Mammary epithelial cell (primary cell): ENCODE measurements at regions of chr4 and their contacts with region 1.

Region 1: GRCh38 chr4:27010334-27010940 is 149.8 kb downstream of the STIM2 start:
- DNase-seq: peak; percentile 32
- H3K4me3 ChIP-seq: no peak overlapping the region
- H3K27ac ChIP-seq: no peak overlapping the region
- H3K4me1 ChIP-seq: peaks cover 4% of the 10 kb centered on the region
- H3K27me3 ChIP-seq: no peaks in the 10 kb centered on the region
- CTCF ChIP-seq: peak; percentile 85 to 86

Region 2: DNA sequence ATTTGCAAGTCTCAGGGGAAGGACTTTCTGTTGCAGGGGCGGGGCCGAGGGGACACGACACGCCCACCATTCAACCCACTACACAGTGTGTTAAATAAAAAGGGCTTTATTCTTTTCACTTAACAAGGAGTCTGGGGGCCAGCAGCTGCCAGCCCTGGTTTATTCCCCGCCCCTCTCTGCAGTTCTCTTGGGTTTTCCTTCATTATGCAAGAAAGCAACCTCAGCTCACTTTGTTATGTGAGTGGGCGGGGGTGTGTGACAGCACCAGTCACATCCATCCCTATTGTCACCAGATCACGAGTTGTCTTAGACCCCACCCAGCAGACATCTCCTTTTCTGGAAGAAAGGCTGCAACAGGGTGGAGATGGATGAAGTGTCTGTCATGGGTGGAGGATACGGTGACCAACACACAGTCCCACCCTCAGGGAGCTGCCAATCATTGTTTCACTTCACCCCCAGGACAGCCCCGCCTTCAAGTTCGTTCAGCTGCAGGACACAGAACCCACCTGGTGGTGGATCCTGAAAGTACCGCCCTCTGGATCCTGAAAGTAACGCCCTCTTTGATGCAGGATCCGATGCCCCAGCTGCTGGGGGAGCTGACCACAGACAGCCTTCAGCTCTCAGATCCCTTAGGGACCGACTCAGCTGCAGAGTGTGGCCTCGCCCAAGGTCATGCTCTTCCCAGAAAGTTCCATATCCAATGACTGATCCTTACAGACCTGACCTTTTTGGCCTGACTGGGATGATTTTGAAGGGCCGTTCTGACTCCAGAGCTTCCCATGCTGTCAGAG is 1016.8 kb before region 1 on chr4:
- CTCF ChIA-PET with region 1: no interaction called
- dilution Hi-C with region 1: no loop called
- in situ Hi-C with region 1: loop called in 1 of 2 experiments (anchors 25 kb)
- intact Hi-C with region 1: loop called (anchors 2 kb)
- DNase-seq: no peak
- H3K4me3 ChIP-seq: no peak overlapping the region
- H3K27ac ChIP-seq: no peak overlapping the region
- H3K4me1 ChIP-seq: no peaks in the 10 kb centered on the region
- H3K27me3 ChIP-seq: no peaks in the 10 kb centered on the region
- CTCF ChIP-seq: no peak

Region 3: GRCh38 chr4:26235500-26235899 is 774.9 kb before region 1 on chr4:
- CTCF ChIA-PET with region 1: no interaction called
- dilution Hi-C with region 1: no loop called
- in situ Hi-C with region 1: no loop called
- intact Hi-C with region 1: no loop called
- DNase-seq: peak; percentile 49
- H3K4me3 ChIP-seq: no peak overlapping the region
- H3K27ac ChIP-seq: no peak overlapping the region
- H3K4me1 ChIP-seq: no peaks in the 10 kb centered on the region
- H3K27me3 ChIP-seq: peaks cover 6% of the 10 kb centered on the region
- CTCF ChIP-seq: peak in 1 of 2 donors; percentile 32

Region 4: GRCh38 chr4:26330186-26330787 is 680.1 kb before region 1 on chr4:
- CTCF ChIA-PET with region 1: no interaction called
- dilution Hi-C with region 1: no loop called
- in situ Hi-C with region 1: loop called in 1 of 2 experiments (anchors 25 kb)
- intact Hi-C with region 1: loop called (anchors 1 kb)
- DNase-seq: peak; percentile 34
- H3K4me3 ChIP-seq: no peak overlapping the region
- H3K27ac ChIP-seq: no peak overlapping the region
- H3K4me1 ChIP-seq: peaks cover 14% of the 10 kb centered on the region
- H3K27me3 ChIP-seq: no peaks in the 10 kb centered on the region
- CTCF ChIP-seq: peak; percentile 55 to 64

Region 5: GRCh38 chr4:26459054-26459755 is 551.2 kb before region 1 on chr4:
- CTCF ChIA-PET with region 1: interaction called, 4 read pairs
- dilution Hi-C with region 1: no loop called
- in situ Hi-C with region 1: loop called (anchors 10 to 25 kb)
- intact Hi-C with region 1: loop called (anchors 1 kb)
- DNase-seq: peak; percentile 44
- H3K4me3 ChIP-seq: no peak overlapping the region
- H3K27ac ChIP-seq: no peak overlapping the region
- H3K4me1 ChIP-seq: no peaks in the 10 kb centered on the region
- H3K27me3 ChIP-seq: no peaks in the 10 kb centered on the region
- CTCF ChIP-seq: peak; percentile 62 to 69

Region 6: GRCh38 chr4:26746802-26747213 is 263.6 kb before region 1 on chr4:
- CTCF ChIA-PET with region 1: no interaction called
- dilution Hi-C with region 1: no loop called
- in situ Hi-C with region 1: loop called in 1 of 2 experiments (anchors 25 kb)
- intact Hi-C with region 1: no loop called
- DNase-seq: peak; percentile 16
- H3K4me3 ChIP-seq: no peak overlapping the region
- H3K27ac ChIP-seq: no peak overlapping the region
- H3K4me1 ChIP-seq: no peaks in the 10 kb centered on the region
- H3K27me3 ChIP-seq: no peaks in the 10 kb centered on the region
- CTCF ChIP-seq: no peak

Region 7: DNA sequence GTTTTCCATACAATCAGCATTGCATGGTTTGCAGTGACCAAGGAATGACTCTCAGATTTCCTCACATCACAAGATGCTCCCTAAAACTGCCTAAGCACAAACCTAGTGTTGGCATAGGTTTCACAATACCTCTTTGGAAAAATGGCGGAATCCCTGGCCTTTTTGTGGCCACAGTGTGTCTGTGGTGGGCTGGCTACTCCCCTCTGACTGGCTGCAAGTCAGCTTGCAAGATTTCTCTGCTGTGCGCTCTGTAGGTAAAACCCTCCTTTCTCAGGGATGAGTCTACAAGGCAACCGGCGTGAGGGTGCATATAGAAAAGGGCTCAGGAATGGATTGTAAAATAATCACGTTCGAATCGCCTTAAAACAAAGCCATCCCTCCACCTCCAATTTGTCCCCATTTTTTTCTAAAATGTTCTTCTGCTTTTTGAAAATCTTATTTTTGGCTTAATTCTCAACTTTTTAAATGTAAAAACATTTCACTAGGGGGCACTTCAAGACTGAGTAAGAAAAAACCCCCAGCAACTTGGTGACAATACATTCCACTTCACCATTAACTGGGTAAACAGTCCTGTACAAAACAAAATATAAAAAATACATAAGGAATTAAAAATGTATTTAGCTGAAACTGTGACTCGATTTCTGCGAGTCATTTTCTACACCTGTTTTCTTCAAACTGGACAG is 85.8 kb after region 1 on chr4:
- CTCF ChIA-PET with region 1: no interaction called
- dilution Hi-C with region 1: no loop called
- in situ Hi-C with region 1: no loop called
- intact Hi-C with region 1: no loop called
- DNase-seq: no peak
- H3K4me3 ChIP-seq: no peak overlapping the region
- H3K27ac ChIP-seq: no peak overlapping the region
- H3K4me1 ChIP-seq: no peaks in the 10 kb centered on the region
- H3K27me3 ChIP-seq: no peaks in the 10 kb centered on the region
- CTCF ChIP-seq: no peak